H1 (cell line): ENCODE measurements at regions of chr2 and their contacts with region 1.

Region 1: GRCh38 chr2:216765761-216766262 is 70.5 kb upstream of the IGFBP5 start:
- DNase-seq: peak; percentile 75 to 78
- H3K4me3 ChIP-seq: peak overlapping the region in 1 of 4 experiments; percentile 19; a peak in 2 of 8 replicates
- H3K27ac ChIP-seq: no peak overlapping the region; the same call in 1 of the 2 replicates
- H3K4me1 ChIP-seq: peaks cover 4 to 17% (median 8%) of the 10 kb centered on the region in 4 experiments
- H3K27me3 ChIP-seq: no peaks in the 10 kb centered on the region; a peak in 1 of 7 replicates
- CTCF ChIP-seq: peak; percentile 17 to 34 (median 18); a peak in 3 of 4 replicates
- EP300 ChIP-seq: peak in 1 of 2 experiments; percentile 56; a peak in 1 of 3 replicates
- POLR2A ChIP-seq: no peak
- RAD21 ChIP-seq: peak in 1 of 2 experiments; percentile 35; a peak in 2 of 4 replicates

Region 2: GRCh38 chr2:216740557-216741222 is 25.1 kb before region 1 on chr2:
- CTCF ChIA-PET with region 1: interaction called, 13 read pairs
- POLR2A ChIA-PET with region 1: no interaction called
- DNase-seq: no peak
- H3K4me3 ChIP-seq: no peak overlapping the region
- H3K27ac ChIP-seq: no peak overlapping the region
- H3K4me1 ChIP-seq: peaks cover 0 to 10% (median 1%) of the 10 kb centered on the region in 4 experiments; a peak in 3 of 7 replicates
- H3K27me3 ChIP-seq: no peaks in the 10 kb centered on the region
- CTCF ChIP-seq: no peak
- EP300 ChIP-seq: no peak
- POLR2A ChIP-seq: no peak
- RAD21 ChIP-seq: no peak